Activated B cell treated with CpG ODN at 0.5 μM for 24 hours (primary cell): ENCODE measurements at regions of chr17 and their contacts with region 1.

Region 1: GRCh38 chr17:45093444-45094110 is 32.5 kb downstream of the NMT1 start:
- DNase-seq: no peak
- ATAC-seq: no peak
- H3K4me3 Mint-ChIP-seq: no peak overlapping the region
- H3K27ac Mint-ChIP-seq: no peak overlapping the region
- H3K4me1 Mint-ChIP-seq: peaks cover 5% of the 10 kb centered on the region
- H3K27me3 Mint-ChIP-seq: no peaks in the 10 kb centered on the region
- CTCF ChIP-seq: no peak

Region 2: GRCh38 chr17:45051060-45051719 is 42.4 kb before region 1 on chr17 and contains the start of gene DCAKD:
- CTCF ChIA-PET with region 1: no interaction called
- POLR2A ChIA-PET with region 1: interaction called, 11 read pairs
- intact Hi-C with region 1: no loop called
- DNase-seq: peak; percentile 86
- ATAC-seq: peak; percentile 99
- H3K4me3 Mint-ChIP-seq: peak within 1 kb of the TSS; percentile 86
- H3K27ac Mint-ChIP-seq: peak within 1 kb of the TSS; percentile 93
- H3K4me1 Mint-ChIP-seq: peaks cover 26% of the 10 kb centered on the region
- H3K27me3 Mint-ChIP-seq: no peaks in the 10 kb centered on the region
- CTCF ChIP-seq: no peak
- total RNA-seq, gene DCAKD: 12.9 and 15.6 TPM in 2 replicates